GM10248 (cell line): ENCODE measurements at regions of chr2 and their contacts with region 1.

Region 1: GRCh38 chr2:85551698-85552678 is 9.3 kb downstream of the GGCX start:
- DNase-seq: peak; percentile 76
- CTCF ChIP-seq: peak; percentile 87

Region 2: DNA sequence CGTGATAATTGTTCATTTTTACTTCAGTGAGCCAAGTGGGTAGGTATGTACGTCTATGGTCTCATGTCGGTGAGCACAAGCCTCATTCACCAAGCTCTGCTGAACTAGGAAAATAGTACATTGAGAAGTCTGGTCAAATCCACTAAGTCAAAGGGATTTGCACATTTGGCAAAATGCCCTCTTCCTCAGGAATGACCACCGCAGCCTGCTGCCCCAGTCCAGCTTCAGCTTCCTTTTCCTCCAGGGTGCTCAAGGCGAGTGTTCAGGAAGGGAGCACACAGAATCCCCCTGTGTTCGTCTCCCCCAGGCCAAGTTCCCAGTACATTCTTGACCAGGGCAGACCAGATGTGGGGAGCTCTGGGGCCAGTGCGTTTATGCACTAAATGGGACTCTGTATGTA is 395.8 kb before region 1 on chr2:
- CTCF ChIA-PET with region 1: no interaction called
- POLR2A ChIA-PET with region 1: no interaction called
- DNase-seq: no peak
- CTCF ChIP-seq: no peak

Region 3: DNA sequence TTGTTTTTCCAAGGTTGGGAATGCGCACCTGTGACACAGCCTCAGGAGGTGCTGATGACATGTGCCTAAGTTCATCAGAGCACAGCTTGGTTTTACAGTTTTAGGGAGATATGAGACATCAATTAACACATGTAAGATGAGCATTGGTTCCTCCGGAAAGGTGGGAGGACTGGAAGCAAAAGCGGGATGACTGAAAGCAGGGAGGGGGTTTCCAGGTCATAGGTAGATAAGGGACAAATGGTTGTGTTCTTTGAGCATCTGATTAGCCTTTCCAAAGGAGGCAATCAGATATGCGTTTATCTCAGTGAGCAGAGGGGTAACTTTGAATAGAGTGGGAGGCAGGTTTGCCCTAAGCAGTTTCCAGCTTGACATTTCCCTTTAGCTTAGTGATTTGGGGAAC is 168.1 kb before region 1 on chr2:
- CTCF ChIA-PET with region 1: interaction called, 85 read pairs
- POLR2A ChIA-PET with region 1: no interaction called
- DNase-seq: no peak
- CTCF ChIP-seq: no peak

Region 4: GRCh38 chr2:85390941-85391669 is 160.9 kb before region 1 on chr2:
- CTCF ChIA-PET with region 1: interaction called, 85 read pairs
- POLR2A ChIA-PET with region 1: interaction called, 3 read pairs
- DNase-seq: peak; percentile 72
- CTCF ChIP-seq: peak; percentile 82

Region 5: DNA sequence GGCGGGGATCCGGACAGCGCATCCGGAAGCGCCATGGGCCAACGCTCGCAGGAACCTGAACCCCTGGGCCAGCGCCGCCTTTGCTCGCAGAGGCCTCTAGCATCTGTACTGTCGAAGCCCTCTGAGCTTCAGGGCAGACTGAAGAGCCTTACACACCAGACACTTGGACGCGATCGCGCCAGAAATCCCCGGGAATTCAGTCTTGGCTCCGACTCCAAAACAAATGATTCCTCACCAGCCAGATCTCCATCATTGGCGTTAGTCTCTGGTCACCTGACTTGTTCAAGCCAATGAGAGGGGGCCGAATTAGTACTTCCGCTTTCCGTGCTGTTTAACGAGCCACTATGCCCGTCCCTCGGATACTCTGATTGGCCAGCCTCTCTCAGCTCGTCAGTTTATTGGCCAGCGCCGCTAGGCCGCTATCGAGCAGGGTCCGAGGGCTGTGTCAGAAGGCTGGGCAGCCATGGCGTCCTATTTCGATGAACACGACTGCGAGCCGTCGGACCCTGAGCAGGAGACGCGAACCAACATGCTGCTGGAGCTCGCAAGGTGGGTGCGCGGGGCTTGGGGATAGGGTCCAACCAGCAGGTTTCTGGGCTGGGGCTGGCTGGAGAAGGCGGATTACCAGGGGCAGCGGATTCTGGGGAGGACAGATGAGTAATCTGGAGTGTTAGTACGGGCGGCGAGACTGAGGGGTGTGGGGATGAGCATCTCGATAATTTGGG is 43.5 kb after region 1 on chr2 and contains the start of gene RNF181:
- CTCF ChIA-PET with region 1: interaction called, 10 read pairs
- POLR2A ChIA-PET with region 1: interaction called, 4 read pairs
- DNase-seq: peak; percentile 95
- CTCF ChIP-seq: no peak

Region 6: GRCh38 chr2:85628658-85629057 is 76.7 kb after region 1 on chr2:
- CTCF ChIA-PET with region 1: no interaction called
- POLR2A ChIA-PET with region 1: no interaction called
- DNase-seq: peak; percentile 51
- CTCF ChIP-seq: no peak